Activated CD4-positive, alpha-beta T cell treated with anti-CD3 and anti-CD28 coated beads for 36 hours (primary cell): ENCODE measurements at regions of chr7 and their contacts with region 1.

Region 1: GRCh38 chr7:21427182-21427870 is 557 bp upstream of the SP4 start:
- DNase-seq: peak; percentile 99
- ATAC-seq: peak; percentile 80
- H3K4me3 Mint-ChIP-seq: peak overlapping the region; percentile 99
- H3K27ac Mint-ChIP-seq: peak overlapping the region; percentile 100
- H3K4me1 Mint-ChIP-seq: peaks cover 38% of the 10 kb centered on the region
- H3K27me3 Mint-ChIP-seq: no peaks in the 10 kb centered on the region

Region 2: GRCh38 chr7:20786779-20787659 is 640.3 kb before region 1 on chr7 and contains the start of gene SP8:
- CTCF ChIA-PET with region 1: no interaction called
- POLR2A ChIA-PET with region 1: no interaction called
- intact Hi-C with region 1: loop called in 1 of 2 experiments (anchors 2 kb)
- DNase-seq: peak; percentile 64
- ATAC-seq: peak; percentile 72
- H3K4me3 Mint-ChIP-seq: peak within 1 kb of the TSS; percentile 66
- H3K27ac Mint-ChIP-seq: peak within 1 kb of the TSS; percentile 37
- H3K4me1 Mint-ChIP-seq: peaks cover 26% of the 10 kb centered on the region
- H3K27me3 Mint-ChIP-seq: peaks cover 68% of the 10 kb centered on the region
- total RNA-seq, gene SP8: not detected

Region 3: GRCh38 chr7:21338728-21339164 is 88.6 kb before region 1 on chr7:
- CTCF ChIA-PET with region 1: interaction called, 3 read pairs
- POLR2A ChIA-PET with region 1: interaction called, 14 read pairs
- intact Hi-C with region 1: loop called (anchors 1 kb)
- DNase-seq: peak; percentile 76
- ATAC-seq: peak; percentile 95
- H3K4me3 Mint-ChIP-seq: peak overlapping the region; percentile 21
- H3K27ac Mint-ChIP-seq: peak overlapping the region; percentile 95
- H3K4me1 Mint-ChIP-seq: peaks cover 32% of the 10 kb centered on the region
- H3K27me3 Mint-ChIP-seq: peaks cover 4% of the 10 kb centered on the region

Region 4: DNA sequence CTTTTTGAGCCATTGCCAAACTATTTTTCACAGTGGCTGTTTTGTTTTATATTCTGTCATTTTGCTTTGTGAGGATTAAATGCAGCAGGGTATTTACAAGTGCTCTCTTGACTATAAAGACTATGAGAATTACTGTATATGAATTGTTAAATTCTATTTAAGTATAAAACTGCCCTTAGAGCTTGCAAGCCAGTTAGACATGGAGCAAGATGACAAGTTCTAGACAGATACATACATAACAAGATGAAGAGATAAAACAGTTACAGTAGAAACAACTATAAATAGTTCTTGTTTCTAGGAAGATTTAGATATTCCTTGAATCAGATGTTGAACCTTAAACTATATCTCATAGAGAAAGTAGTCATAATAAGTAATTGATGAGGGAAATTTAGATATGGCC is 176.1 kb after region 1 on chr7:
- CTCF ChIA-PET with region 1: no interaction called
- POLR2A ChIA-PET with region 1: no interaction called
- intact Hi-C with region 1: no loop called
- DNase-seq: no peak
- ATAC-seq: no peak
- H3K4me3 Mint-ChIP-seq: no peak overlapping the region
- H3K27ac Mint-ChIP-seq: no peak overlapping the region
- H3K4me1 Mint-ChIP-seq: peaks cover 8% of the 10 kb centered on the region
- H3K27me3 Mint-ChIP-seq: peaks cover 2% of the 10 kb centered on the region

Region 5: DNA sequence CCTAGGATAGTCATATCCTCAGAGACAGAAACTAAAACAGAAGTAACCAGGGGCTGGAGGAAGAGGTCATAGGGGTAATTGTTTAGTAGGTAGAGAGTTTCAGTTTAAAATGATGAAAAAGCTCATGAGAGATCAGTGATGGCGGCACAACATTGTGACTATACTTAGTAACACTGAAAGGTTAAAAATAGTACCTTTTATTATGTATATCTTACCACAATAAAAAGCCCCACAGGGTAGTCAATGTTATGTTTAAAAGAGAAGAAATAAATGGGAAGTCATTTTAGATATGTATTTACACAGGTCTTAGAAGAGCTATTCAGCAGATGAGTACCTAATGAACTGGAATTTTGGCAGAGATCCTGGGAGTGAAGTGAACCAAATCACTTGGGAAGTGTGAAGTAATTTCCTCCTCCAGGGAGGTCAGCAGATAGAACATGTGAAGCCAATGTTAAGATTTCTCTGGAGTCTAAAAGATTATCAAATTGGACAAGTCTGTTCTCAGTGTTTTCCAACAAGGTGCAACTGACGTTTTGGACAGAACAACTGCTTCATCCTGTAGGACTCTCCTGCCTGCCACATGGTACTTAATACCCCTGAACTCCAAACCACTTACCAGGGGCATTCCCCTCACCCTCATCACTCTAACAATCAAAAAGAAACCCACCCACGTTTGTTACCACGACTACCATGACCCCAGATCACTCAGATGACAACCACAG is 512.0 kb after region 1 on chr7:
- CTCF ChIA-PET with region 1: no interaction called
- POLR2A ChIA-PET with region 1: interaction called, 9 read pairs
- intact Hi-C with region 1: loop called (anchors 1 kb)
- DNase-seq: peak; percentile 82
- ATAC-seq: peak; percentile 82
- H3K4me3 Mint-ChIP-seq: peak overlapping the region; percentile 53
- H3K27ac Mint-ChIP-seq: peak overlapping the region; percentile 92
- H3K4me1 Mint-ChIP-seq: peaks cover 74% of the 10 kb centered on the region
- H3K27me3 Mint-ChIP-seq: peaks cover 2% of the 10 kb centered on the region

Region 6: GRCh38 chr7:23013715-23014649 is 1586.7 kb after region 1 on chr7 and contains the start of gene HYCC1:
- CTCF ChIA-PET with region 1: no interaction called
- POLR2A ChIA-PET with region 1: no interaction called
- intact Hi-C with region 1: loop called in 1 of 2 experiments (anchors 5 kb)
- DNase-seq: peak; percentile 99
- ATAC-seq: peak; percentile 99
- H3K4me3 Mint-ChIP-seq: peak within 1 kb of the TSS; percentile 92
- H3K27ac Mint-ChIP-seq: peak within 1 kb of the TSS; percentile 83
- H3K4me1 Mint-ChIP-seq: peaks cover 24% of the 10 kb centered on the region
- H3K27me3 Mint-ChIP-seq: peaks cover 3% of the 10 kb centered on the region
- total RNA-seq, gene HYCC1: 19.2 to 23.9 TPM